PC-9 (cell line): ENCODE measurements at regions of chrX and their contacts with region 1.

Region 1: DNA sequence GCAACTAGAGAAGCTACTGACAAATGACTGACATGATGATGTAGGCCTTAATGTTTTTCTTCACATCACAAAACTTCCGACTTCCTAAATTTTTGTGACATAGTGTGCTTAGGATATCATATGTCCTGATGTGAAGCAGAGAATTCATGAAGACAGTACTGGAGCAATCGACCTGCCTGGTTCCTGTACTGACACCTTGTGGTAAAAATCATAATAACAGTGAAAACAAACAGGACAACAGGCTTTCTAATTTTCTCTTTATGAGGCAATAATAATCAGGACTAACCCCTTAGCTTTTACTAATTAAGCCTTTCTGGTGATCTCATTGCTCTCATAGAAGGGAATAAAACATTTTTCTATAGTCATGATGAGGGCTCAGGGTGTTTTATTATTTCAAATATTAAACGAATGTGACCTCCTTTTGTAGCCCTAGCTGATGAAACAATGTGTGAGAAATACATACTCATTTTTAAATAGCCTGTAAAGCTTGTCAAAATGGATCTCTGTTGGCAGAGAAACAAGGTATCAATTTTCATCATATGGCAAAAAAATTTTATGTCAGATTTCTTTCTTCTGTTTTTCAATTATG is 158.4 kb downstream of the TENT5D start:
- DNase-seq: no peak
- H3K4me3 ChIP-seq: no peak overlapping the region
- H3K27ac ChIP-seq: no peak overlapping the region
- H3K4me1 ChIP-seq: no peaks in the 10 kb centered on the region
- H3K27me3 ChIP-seq: 0 out of 2 replicates have a peak, but pooled peaks cover 2% of the 10 kb centered on the region
- CTCF ChIP-seq: peak; percentile 60

Region 2: DNA sequence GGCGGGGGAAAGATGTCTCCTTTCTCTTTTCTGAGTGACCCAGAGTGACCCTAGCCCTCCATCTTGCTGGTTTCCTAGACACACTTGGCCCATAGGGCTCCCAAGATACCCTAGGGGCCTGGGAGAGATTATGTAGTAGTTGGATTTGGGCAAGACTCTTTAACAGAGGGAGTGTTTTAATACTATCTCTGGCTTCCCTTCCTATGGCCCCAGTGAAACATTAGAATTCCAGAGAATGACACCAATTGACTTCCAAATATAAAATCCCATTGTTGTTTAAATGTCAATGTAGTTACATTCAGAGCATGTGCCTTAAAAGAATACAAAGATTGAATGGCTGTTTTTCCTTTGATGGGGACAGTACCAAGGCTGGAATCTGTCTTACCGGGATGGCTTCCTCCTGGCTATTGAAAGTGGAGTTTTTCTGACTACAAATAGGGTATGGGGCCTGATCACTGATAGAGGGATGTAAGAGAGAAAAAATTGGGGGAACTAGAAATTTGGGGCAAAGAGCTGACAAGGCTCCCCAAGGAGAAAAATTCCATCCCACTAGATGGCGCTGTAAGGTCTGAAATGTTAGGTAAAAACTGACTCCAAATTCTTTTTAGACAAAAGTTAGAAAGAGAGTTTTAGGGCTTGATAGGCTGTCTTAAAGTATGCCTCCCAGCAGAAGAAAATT is 147.6 kb before region 1 on chrX:
- CTCF ChIA-PET with region 1: no interaction called
- POLR2A ChIA-PET with region 1: no interaction called
- intact Hi-C with region 1: loop called (anchors 5 kb)
- DNase-seq: no peak
- H3K4me3 ChIP-seq: no peak overlapping the region
- H3K27ac ChIP-seq: no peak overlapping the region
- H3K4me1 ChIP-seq: no peaks in the 10 kb centered on the region
- H3K27me3 ChIP-seq: no peaks in the 10 kb centered on the region
- CTCF ChIP-seq: peak; percentile 55